GM12878 (cell line): ENCODE measurements at regions of chr6 and their contacts with region 1.

Region 1: GRCh38 chr6:100370265-100370664 is 94.5 kb downstream of the SIM1 start:
- DNase-seq: no peak
- ATAC-seq: no peak
- H3K4me3 ChIP-seq: no peak overlapping the region
- H3K27ac ChIP-seq: no peak overlapping the region
- H3K4me1 ChIP-seq: no peaks in the 10 kb centered on the region
- H3K27me3 ChIP-seq: no peaks in the 10 kb centered on the region
- CTCF ChIP-seq: 0 out of 6 replicates have a peak, but pooled peaks of 1 of the 3 experiments have one; percentile 9
- EP300 ChIP-seq: no peak
- POLR2A ChIP-seq: no peak
- RAD21 ChIP-seq: 0 out of 2 replicates have a peak, but pooled peaks have one; percentile 11

Region 2: GRCh38 chr6:99993533-99994251 is 376.6 kb before region 1 on chr6 and contains the start of gene MCHR2:
- CTCF ChIA-PET with region 1: no interaction called
- POLR2A ChIA-PET with region 1: no interaction called
- RAD21 ChIA-PET with region 1: no interaction called
- SMC1A ChIA-PET with region 1: no interaction called
- in situ Hi-C with region 1: no loop called
- intact Hi-C with region 1: no loop called
- DNase-seq: no peak
- ATAC-seq: no peak
- H3K4me3 ChIP-seq: no peak within 1 kb of the TSS
- H3K27ac ChIP-seq: no peak within 1 kb of the TSS
- H3K4me1 ChIP-seq: no peaks in the 10 kb centered on the region
- H3K27me3 ChIP-seq: peaks cover 0 to 2% of the 10 kb centered on the region in 2 experiments; a peak in 1 of 4 replicates
- CTCF ChIP-seq: no peak
- EP300 ChIP-seq: no peak
- POLR2A ChIP-seq: no peak
- RAD21 ChIP-seq: no peak
- polyA plus RNA-seq, gene MCHR2: not detected

Region 3: GRCh38 chr6:100504786-100505737 is 134.8 kb after region 1 on chr6:
- CTCF ChIA-PET with region 1: no interaction called
- POLR2A ChIA-PET with region 1: no interaction called
- RAD21 ChIA-PET with region 1: no interaction called
- SMC1A ChIA-PET with region 1: no interaction called
- in situ Hi-C with region 1: no loop called
- intact Hi-C with region 1: no loop called
- DNase-seq: no peak
- ATAC-seq: peak; percentile 50
- H3K4me3 ChIP-seq: no peak overlapping the region
- H3K27ac ChIP-seq: no peak overlapping the region
- H3K4me1 ChIP-seq: no peaks in the 10 kb centered on the region
- H3K27me3 ChIP-seq: no peaks in the 10 kb centered on the region
- CTCF ChIP-seq: no peak
- EP300 ChIP-seq: no peak
- POLR2A ChIP-seq: no peak
- RAD21 ChIP-seq: no peak

Region 4: GRCh38 chr6:100657678-100658330 is 287.5 kb after region 1 on chr6:
- CTCF ChIA-PET with region 1: no interaction called
- POLR2A ChIA-PET with region 1: no interaction called
- RAD21 ChIA-PET with region 1: no interaction called
- SMC1A ChIA-PET with region 1: no interaction called
- in situ Hi-C with region 1: no loop called
- intact Hi-C with region 1: loop called (anchors 5 kb)
- DNase-seq: no peak
- ATAC-seq: peak; percentile 66
- H3K4me3 ChIP-seq: no peak overlapping the region
- H3K27ac ChIP-seq: no peak overlapping the region
- H3K4me1 ChIP-seq: no peaks in the 10 kb centered on the region
- H3K27me3 ChIP-seq: no peaks in the 10 kb centered on the region
- CTCF ChIP-seq: peak; percentile 43 to 78 (median 45); a peak in 3 of 6 replicates
- EP300 ChIP-seq: no peak
- POLR2A ChIP-seq: no peak
- RAD21 ChIP-seq: peak; percentile 61